ENCODE measurements at regions of chr19 and their contacts with region 1.

Region 1: DNA sequence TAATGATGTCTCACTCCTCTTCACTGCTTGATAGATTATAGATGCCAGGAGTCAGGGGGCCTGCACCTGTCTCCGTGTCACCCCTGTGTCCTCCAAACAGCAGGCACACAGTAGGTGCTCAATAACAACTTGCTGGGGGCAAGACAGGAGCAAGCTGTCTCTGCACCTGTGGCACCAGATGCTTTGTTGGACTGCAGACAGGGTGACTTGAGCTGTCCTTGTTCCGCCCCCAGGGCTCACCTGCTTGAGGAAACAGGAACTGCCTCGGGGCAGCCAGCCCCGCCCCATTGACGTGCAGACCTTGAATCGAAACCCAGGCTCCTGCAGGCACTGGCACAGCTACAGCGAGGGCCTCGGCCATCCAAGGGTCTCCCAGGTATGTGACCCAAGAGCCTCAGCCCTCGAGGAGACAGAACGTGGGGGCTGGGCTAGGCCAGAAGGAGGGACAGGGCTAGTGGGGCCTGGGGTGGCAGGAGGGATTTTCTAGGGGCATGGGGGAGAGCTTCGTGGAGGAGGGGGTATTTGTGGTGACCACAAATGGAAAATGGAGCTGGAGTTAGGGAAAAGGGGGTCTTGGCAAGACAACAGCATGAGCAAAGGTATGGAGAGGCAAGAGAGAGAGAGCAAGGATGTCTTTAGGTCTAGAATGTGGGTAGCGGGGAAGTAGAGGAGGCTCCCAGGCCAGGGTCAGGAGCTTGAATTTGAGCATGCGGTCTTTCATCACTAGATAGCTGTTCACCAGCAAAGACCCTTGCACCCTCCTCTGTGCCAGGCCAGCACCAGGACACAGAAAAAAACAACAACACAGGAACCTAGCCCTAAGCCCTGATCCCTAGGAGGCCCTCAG is at the start of gene HSH2D:
- DNase-seq: peak; percentile 91
- H3K4me3 Mint-ChIP-seq: peak within 1 kb of the TSS; percentile 99
- H3K27ac Mint-ChIP-seq: peak within 1 kb of the TSS; percentile 100
- H3K4me1 Mint-ChIP-seq: peaks cover 74% of the 10 kb centered on the region
- H3K27me3 Mint-ChIP-seq: no peaks in the 10 kb centered on the region
- total RNA-seq, gene HSH2D: 101 to 110 TPM

Region 2: GRCh38 chr19:16070366-16070990 is 73.1 kb before region 1 on chr19:
- CTCF ChIA-PET with region 1: interaction called, 4 read pairs
- POLR2A ChIA-PET with region 1: interaction called, 14 read pairs
- DNase-seq: peak; percentile 90
- H3K4me3 Mint-ChIP-seq: no peak overlapping the region
- H3K27ac Mint-ChIP-seq: no peak overlapping the region
- H3K4me1 Mint-ChIP-seq: peaks cover 53% of the 10 kb centered on the region
- H3K27me3 Mint-ChIP-seq: no peaks in the 10 kb centered on the region

Region 3: DNA sequence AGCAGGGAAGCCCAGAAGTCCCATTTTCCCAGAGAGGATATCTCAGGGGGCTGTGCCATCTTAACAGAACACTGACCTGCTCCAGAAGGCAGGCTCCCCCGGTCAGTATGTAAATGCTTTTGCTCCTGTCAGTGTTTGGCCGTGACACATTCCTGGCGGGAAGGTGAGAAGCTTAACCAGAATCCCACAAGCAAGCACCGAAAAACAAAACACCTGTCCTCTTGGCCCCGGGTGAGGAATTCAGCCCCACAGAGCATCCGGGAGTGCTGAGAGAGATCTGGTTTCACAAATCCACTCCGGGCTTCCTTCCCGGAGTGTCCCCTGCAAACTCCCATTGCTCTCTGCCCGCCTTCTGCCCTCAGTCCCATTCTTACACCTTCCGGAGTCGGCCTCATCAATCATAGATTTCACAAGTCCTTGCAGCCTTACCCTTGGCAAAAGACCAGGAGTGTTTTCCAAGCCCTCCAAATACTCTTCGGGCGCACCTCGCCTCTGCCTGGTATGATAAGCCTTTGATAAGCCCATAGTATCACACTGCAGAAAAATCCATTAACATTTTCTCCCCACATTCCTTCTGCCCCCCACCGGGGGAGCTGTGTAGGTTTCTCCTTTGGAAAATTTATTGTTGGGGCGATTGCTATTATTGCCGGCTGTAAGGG is 55.1 kb before region 1 on chr19:
- CTCF ChIA-PET with region 1: interaction called, 7 read pairs
- POLR2A ChIA-PET with region 1: interaction called, 28 read pairs
- DNase-seq: no peak
- H3K4me3 Mint-ChIP-seq: no peak overlapping the region
- H3K27ac Mint-ChIP-seq: peak overlapping the region; percentile 40
- H3K4me1 Mint-ChIP-seq: peaks cover 73% of the 10 kb centered on the region
- H3K27me3 Mint-ChIP-seq: no peaks in the 10 kb centered on the region

Region 4: GRCh38 chr19:16111160-16111908 is 32.3 kb before region 1 on chr19 and contains the start of gene RAB8A:
- CTCF ChIA-PET with region 1: interaction called, 15 read pairs
- POLR2A ChIA-PET with region 1: interaction called, 31 read pairs
- DNase-seq: peak; percentile 98
- H3K4me3 Mint-ChIP-seq: peak within 1 kb of the TSS; percentile 99
- H3K27ac Mint-ChIP-seq: peak within 1 kb of the TSS; percentile 96
- H3K4me1 Mint-ChIP-seq: peaks cover 42% of the 10 kb centered on the region
- H3K27me3 Mint-ChIP-seq: no peaks in the 10 kb centered on the region
- total RNA-seq, gene RAB8A: 141 to 147 TPM

Region 5: GRCh38 chr19:16153582-16154336 is 10.1 kb after region 1 on chr19:
- CTCF ChIA-PET with region 1: interaction called, 5 read pairs
- POLR2A ChIA-PET with region 1: interaction called, 39 read pairs
- DNase-seq: no peak
- H3K4me3 Mint-ChIP-seq: no peak overlapping the region
- H3K27ac Mint-ChIP-seq: no peak overlapping the region
- H3K4me1 Mint-ChIP-seq: peaks cover 39% of the 10 kb centered on the region
- H3K27me3 Mint-ChIP-seq: no peaks in the 10 kb centered on the region

Region 6: DNA sequence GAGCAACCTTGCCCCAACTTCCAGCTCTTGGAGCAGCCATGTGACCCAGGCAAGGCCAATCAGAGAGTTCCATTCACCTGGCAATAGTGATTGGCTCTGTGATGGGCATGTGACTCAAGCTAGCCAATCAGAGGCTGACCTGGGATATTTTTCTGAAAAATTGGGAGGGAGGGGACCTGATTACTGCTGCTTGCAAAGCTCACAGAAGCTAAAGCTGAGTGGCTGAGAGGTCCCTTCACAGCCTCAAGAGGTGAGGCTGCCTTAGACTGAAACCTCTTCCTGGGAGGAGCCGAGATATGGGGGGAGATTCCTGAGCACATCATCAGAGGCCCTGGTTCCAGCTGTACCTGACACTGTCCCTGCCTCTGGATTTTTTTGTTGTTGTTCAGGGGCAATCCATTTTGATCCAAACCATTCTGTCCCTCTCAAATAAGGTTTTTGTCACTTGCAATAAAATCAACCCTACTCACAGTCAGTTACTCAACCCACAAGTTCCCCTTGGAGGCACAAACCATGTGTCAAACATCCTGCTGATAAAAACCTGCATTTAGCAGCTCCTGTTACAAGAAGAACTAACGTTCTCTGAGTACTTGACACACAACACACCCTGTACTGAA is 25.0 kb after region 1 on chr19:
- CTCF ChIA-PET with region 1: interaction called, 11 read pairs
- POLR2A ChIA-PET with region 1: interaction called, 8 read pairs
- DNase-seq: no peak
- H3K4me3 Mint-ChIP-seq: no peak overlapping the region
- H3K27ac Mint-ChIP-seq: peak overlapping the region; percentile 58
- H3K4me1 Mint-ChIP-seq: peaks cover 20% of the 10 kb centered on the region
- H3K27me3 Mint-ChIP-seq: no peaks in the 10 kb centered on the region

Region 7: GRCh38 chr19:16272945-16273344 is 129.3 kb after region 1 on chr19:
- CTCF ChIA-PET with region 1: no interaction called
- POLR2A ChIA-PET with region 1: no interaction called
- DNase-seq: no peak
- H3K4me3 Mint-ChIP-seq: no peak overlapping the region
- H3K27ac Mint-ChIP-seq: no peak overlapping the region
- H3K4me1 Mint-ChIP-seq: peaks cover 19% of the 10 kb centered on the region
- H3K27me3 Mint-ChIP-seq: peaks cover 22% of the 10 kb centered on the region